ENCODE measurements at regions of chr20 and their contacts with region 1.

Region 1: GRCh38 chr20:40945754-40946450 is 82.7 kb upstream of the TOP1 start:
- DNase-seq: peak; percentile 81
- H3K4me3 ChIP-seq: no peak overlapping the region
- H3K27ac ChIP-seq: no peak overlapping the region
- H3K4me1 ChIP-seq: peaks cover 53% of the 10 kb centered on the region
- CTCF ChIP-seq: peak; percentile 96

Region 2: DNA sequence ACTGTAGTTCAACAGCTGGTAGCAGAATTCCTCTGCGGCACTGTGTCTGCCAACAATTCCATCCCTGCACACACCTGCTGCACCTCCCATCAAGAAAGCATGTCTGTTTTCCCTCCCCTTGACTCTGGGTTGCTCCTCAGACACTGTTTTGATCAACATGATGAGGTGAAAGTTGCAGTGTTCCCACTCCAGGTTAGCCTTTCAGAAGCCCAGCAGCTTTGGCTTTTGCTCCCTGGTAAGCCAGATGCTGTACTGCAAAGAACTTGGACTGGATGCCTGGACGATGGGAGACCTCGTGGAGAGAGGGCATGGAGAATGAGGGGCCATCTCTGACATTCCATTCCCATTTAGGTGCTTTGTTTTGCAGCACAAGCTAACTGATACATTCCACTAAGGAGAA is 177.8 kb before region 1 on chr20:
- CTCF ChIA-PET with region 1: no interaction called
- POLR2A ChIA-PET with region 1: no interaction called
- intact Hi-C with region 1: no loop called
- DNase-seq: no peak
- H3K4me3 ChIP-seq: no peak overlapping the region
- H3K27ac ChIP-seq: no peak overlapping the region
- H3K4me1 ChIP-seq: peaks cover 14% of the 10 kb centered on the region
- CTCF ChIP-seq: no peak

Region 3: DNA sequence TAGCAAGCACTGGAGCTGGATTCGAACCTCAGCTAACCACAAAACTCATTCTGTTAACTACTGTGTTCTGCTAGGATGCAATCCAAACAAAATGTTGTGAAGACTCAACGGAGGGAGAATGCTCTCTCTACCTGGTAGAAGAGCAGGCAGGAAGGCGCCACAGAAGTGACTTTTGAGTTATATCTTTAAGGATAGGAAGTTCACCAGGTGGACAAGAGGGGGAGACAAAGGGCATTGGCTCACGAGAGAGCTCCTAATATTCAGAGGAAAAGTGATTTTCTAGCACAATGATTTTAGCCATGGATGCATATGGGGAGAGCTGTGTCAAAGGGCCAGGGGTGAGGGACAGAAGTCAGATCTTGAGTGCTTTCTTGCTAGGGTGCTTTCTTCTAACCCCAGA is 148.5 kb before region 1 on chr20:
- CTCF ChIA-PET with region 1: interaction called, 3 read pairs
- POLR2A ChIA-PET with region 1: interaction called, 3 read pairs
- intact Hi-C with region 1: loop called (anchors 1 kb)
- DNase-seq: peak; percentile 61
- H3K4me3 ChIP-seq: no peak overlapping the region
- H3K27ac ChIP-seq: no peak overlapping the region
- H3K4me1 ChIP-seq: no peaks in the 10 kb centered on the region
- CTCF ChIP-seq: peak; percentile 86

Region 4: DNA sequence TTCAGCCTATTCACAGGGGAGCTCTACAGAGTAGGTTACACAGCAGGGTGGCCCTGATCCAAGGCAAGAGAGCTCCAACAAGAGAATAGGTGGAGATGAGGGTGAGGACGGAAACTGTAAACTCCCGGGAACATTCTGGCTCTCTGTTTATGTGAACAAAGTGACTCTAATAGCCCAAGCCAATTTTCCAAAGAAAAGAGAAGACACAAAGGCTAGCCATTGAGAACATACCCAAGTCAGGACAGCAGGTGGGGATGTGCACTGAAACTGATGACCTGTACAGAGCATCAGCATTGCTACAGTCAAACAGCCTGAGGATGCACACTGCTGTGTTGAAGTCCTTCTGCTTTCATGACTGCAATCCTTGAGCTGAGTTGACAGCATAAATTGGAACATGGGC is 53.3 kb before region 1 on chr20:
- CTCF ChIA-PET with region 1: interaction called, 5 read pairs
- POLR2A ChIA-PET with region 1: interaction called, 5 read pairs
- intact Hi-C with region 1: loop called (anchors 1 kb)
- DNase-seq: peak; percentile 85
- H3K4me3 ChIP-seq: no peak overlapping the region
- H3K27ac ChIP-seq: no peak overlapping the region
- H3K4me1 ChIP-seq: peaks cover 46% of the 10 kb centered on the region
- CTCF ChIP-seq: peak; percentile 75

Region 5: DNA sequence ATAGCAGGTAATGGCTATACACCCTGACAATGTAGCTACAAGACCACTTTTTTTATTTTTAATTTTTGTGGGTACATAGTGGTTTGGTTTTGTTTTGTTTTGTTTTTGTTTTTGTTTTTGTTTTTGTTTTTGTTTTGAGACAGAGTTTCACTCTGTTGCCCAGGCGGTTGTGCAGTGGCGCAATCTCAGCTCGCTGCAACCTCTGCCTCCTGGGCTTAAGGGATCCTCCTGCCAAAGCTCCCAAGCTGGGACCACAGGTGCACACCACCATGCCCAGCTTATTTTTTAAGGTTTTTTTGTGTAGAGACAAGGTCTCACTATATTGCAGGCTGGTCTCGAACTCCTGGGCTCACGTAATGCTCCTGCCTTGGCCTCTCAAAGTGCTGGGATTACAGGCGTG is 26.2 kb after region 1 on chr20:
- CTCF ChIA-PET with region 1: no interaction called
- POLR2A ChIA-PET with region 1: no interaction called
- intact Hi-C with region 1: no loop called
- DNase-seq: no peak
- H3K4me3 ChIP-seq: no peak overlapping the region
- H3K27ac ChIP-seq: no peak overlapping the region
- H3K4me1 ChIP-seq: peaks cover 18% of the 10 kb centered on the region
- CTCF ChIP-seq: no peak